Lower lobe of right lung (tissue), 2 donors: ENCODE measurements at regions of chr9 and their contacts with region 1.

Region 1: GRCh38 chr9:87324613-87325194 is 173.0 kb upstream of the DAPK1 start:
- DNase-seq: no peak
- ATAC-seq: peak; percentile 51 to 77
- H3K4me3 ChIP-seq: no peak overlapping the region
- H3K27ac ChIP-seq: no peak overlapping the region
- H3K4me1 ChIP-seq: no peaks in the 10 kb centered on the region
- H3K27me3 ChIP-seq: peaks cover 12% of the 10 kb centered on the region
- CTCF ChIP-seq: peak; percentile 76

Region 2: DNA sequence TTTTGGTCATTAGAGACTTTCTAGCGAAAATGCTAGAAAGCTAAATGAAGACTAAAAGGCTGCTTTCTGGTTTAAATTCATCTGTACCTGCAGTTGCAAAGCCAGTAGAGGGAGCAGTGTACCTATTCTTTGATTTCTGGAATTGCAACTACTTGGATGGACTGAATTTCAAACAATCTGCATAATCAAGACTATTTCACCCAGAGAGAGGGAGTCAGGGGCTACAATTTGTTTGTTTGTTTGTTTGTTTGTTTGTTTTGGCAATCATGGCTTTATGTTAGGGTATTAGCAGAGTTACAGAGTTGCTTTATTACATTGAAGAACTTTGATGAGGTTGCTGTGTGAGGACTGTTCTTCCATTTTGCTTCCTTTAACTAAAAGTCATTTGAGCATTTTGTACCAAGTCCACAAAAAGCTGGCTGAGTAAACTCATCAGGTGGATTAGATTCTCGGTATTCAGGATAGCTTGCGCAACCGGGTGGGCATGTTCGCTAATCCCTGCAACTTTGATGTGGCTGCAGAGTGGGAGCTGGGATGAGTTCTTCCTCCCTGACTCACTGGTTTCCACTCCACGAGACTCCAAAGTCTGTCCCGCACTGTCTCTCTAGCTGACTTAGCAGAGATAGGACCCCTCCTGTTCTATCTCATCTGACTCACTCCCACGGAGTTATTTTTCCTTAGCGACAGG is 890.5 kb before region 1 on chr9:
- intact Hi-C with region 1: loop called (anchors 10 kb)
- DNase-seq: no peak
- ATAC-seq: peak; percentile 66
- H3K4me3 ChIP-seq: no peak overlapping the region
- H3K27ac ChIP-seq: no peak overlapping the region
- H3K4me1 ChIP-seq: no peaks in the 10 kb centered on the region
- H3K27me3 ChIP-seq: no peaks in the 10 kb centered on the region
- CTCF ChIP-seq: peak; percentile 74

Region 3: DNA sequence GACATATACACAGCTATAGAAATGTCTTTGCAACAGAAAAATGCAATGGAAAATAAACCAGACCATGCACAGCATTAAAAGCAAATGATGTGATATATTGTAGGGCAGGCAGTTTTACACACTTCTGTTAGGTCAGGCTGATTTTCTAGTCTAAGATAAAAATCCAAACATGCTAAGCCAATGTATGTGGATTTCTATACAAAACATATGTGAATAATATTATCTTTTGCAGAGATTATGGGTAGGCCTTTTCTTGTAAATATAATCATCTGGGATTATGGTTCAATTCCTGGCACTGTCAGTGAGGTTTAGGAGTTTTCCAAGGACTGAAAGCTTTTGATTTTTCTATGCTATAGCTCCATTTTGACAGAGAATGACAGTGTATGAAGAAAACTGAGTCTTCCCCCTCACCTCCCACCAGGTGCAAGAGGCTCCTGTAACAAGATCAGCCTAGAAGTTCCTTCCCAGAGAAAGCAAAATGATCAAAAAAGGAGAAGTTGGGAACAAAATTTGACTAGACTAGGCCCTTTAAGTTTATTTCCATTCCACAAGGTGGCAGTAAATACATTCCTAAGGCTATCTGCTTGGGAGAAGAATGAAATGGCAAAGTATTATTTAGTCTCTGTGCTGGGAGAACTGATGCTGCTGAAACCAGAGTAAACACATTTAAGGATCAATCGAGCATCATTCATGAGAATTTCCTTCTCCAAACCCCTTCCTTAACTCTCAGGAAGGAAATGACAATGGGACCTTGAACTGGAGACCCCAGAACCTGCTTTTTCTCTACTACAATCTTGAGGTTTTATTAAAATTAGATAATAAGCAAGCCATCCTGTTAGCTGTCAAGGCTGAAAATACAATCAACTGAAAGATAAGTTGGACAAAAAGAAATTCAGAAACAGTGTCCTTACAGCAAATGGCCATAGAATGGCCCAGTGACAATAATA is 837.5 kb before region 1 on chr9:
- intact Hi-C with region 1: loop called (anchors 5 kb)
- DNase-seq: no peak
- ATAC-seq: peak; percentile 48 to 78
- H3K4me3 ChIP-seq: no peak overlapping the region
- H3K27ac ChIP-seq: no peak overlapping the region
- H3K4me1 ChIP-seq: no peaks in the 10 kb centered on the region
- H3K27me3 ChIP-seq: no peaks in the 10 kb centered on the region
- CTCF ChIP-seq: peak; percentile 69

Region 4: GRCh38 chr9:87803622-87804345 is 479.1 kb after region 1 on chr9:
- intact Hi-C with region 1: no loop called
- DNase-seq: no peak
- ATAC-seq: no peak
- H3K4me3 ChIP-seq: no peak overlapping the region
- H3K27ac ChIP-seq: no peak overlapping the region
- H3K4me1 ChIP-seq: no peaks in the 10 kb centered on the region
- H3K27me3 ChIP-seq: peaks cover 3% of the 10 kb centered on the region
- CTCF ChIP-seq: no peak